ENCODE measurements at regions of chr4 and their contacts with region 1.

Region 1: GRCh38 chr4:15457406-15458201 is 12.1 kb upstream of the CC2D2A start:
- DNase-seq: no peak
- H3K4me3 Mint-ChIP-seq: no peak overlapping the region
- H3K27ac Mint-ChIP-seq: no peak overlapping the region
- H3K4me1 Mint-ChIP-seq: no peaks in the 10 kb centered on the region
- H3K27me3 Mint-ChIP-seq: peaks cover 4% of the 10 kb centered on the region

Region 2: GRCh38 chr4:15231265-15232091 is 226.1 kb before region 1 on chr4:
- CTCF ChIA-PET with region 1: interaction called, 65 read pairs
- DNase-seq: peak; percentile 83
- H3K4me3 Mint-ChIP-seq: no peak overlapping the region
- H3K27ac Mint-ChIP-seq: no peak overlapping the region
- H3K4me1 Mint-ChIP-seq: peaks cover 33% of the 10 kb centered on the region
- H3K27me3 Mint-ChIP-seq: no peaks in the 10 kb centered on the region

Region 3: DNA sequence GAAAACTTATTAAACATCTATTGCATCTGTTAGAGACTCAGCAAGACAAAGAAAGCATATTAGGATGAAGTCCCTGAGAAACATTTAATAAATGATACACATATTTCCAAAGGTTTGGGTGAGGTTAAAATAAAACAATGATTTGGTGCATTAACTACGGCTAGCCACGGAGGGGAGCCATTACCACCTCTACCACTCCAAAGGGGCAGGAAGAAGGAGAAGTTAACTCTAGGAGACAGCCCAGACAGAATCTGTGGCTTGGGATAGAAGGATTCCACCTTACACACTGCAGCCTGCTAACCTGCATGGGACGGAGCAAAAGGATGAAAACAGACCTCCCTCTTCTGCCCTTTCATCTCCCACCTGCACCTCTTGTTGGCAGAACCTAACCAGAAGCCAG is 218.9 kb before region 1 on chr4:
- CTCF ChIA-PET with region 1: interaction called, 65 read pairs
- DNase-seq: peak; percentile 57
- H3K4me3 Mint-ChIP-seq: no peak overlapping the region
- H3K27ac Mint-ChIP-seq: no peak overlapping the region
- H3K4me1 Mint-ChIP-seq: peaks cover 15% of the 10 kb centered on the region
- H3K27me3 Mint-ChIP-seq: peaks cover 3% of the 10 kb centered on the region

Region 4: GRCh38 chr4:15396157-15396800 is 61.3 kb before region 1 on chr4:
- CTCF ChIA-PET with region 1: interaction called, 62 read pairs
- DNase-seq: peak; percentile 74
- H3K4me3 Mint-ChIP-seq: no peak overlapping the region
- H3K27ac Mint-ChIP-seq: no peak overlapping the region
- H3K4me1 Mint-ChIP-seq: peaks cover 15% of the 10 kb centered on the region
- H3K27me3 Mint-ChIP-seq: no peaks in the 10 kb centered on the region

Region 5: GRCh38 chr4:15425520-15425919 is 32.1 kb before region 1 on chr4:
- CTCF ChIA-PET with region 1: interaction called, 12 read pairs
- DNase-seq: no peak
- H3K4me3 Mint-ChIP-seq: no peak overlapping the region
- H3K27ac Mint-ChIP-seq: no peak overlapping the region
- H3K4me1 Mint-ChIP-seq: peaks cover 17% of the 10 kb centered on the region
- H3K27me3 Mint-ChIP-seq: no peaks in the 10 kb centered on the region

Region 6: DNA sequence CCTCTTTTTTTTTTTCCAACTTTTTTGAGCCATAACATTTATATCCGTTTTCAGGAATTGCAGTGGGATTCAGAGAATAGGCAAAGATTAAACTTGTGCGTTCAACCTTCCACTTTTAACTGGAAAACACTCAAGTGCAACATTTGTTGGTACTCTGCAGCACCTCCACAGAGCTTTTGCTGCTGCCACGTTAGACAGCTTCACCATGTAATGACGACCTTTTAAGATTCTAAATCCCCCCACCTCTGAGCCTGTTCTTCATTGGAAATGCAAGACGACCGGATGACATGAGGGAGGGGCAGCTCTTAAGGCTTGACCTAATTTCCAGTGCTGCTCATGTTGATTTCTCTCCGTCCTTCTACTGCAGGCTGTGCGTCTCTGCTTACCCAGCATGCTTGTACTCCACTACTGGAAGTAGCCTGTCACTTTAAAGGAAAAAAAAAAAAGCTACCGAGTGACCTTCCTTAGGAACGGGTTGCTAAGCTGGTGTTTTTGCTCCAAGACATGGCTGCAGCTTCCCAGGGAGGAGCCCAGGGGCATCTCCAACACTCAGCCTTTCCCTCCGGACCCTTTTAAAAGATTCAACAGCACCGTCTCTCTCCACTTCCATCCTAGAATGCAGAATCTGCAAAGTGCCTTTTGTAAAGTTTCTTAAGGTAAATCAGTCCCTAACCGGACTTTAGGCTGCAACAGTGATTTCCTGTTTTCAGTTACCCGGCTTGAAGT is 12.0 kb after region 1 on chr4 and contains the start of gene CC2D2A:
- CTCF ChIA-PET with region 1: interaction called, 29 read pairs
- DNase-seq: no peak
- H3K4me3 Mint-ChIP-seq: no peak within 1 kb of the TSS
- H3K27ac Mint-ChIP-seq: no peak within 1 kb of the TSS
- H3K4me1 Mint-ChIP-seq: peaks cover 12% of the 10 kb centered on the region
- H3K27me3 Mint-ChIP-seq: peaks cover 4% of the 10 kb centered on the region

Measured in activated naive CD4-positive, alpha-beta T cell treated with anti-CD3 and anti-CD28 coated beads, Interleukin-2, amount 10 ng/mL, durations not matched to agents 7 days and 5 days (primary cell).